H1 (cell line): ENCODE measurements at regions of chr18 and their contacts with region 1.

Region 1: DNA sequence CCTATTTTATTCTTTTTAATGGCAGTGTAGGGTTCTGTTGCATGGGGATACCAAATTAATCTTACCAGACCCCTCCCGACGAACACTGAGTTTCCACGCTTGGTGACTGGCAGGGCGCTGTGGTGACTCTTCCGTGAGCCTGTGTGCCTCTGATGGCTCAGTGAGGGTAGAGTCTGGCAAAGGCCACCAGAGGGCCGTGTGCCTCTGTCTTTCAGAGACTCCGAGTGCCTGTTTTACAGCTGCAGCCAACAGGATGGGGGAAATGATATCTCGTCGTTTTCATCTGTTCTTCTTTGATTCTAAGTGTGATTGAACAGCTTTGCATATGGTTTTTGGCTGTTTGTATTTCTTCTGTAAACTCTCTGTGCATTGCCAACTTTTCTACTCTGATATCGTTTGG is 99.8 kb downstream of the ZNF236 start:
- DNase-seq: peak in 1 of 2 experiments; percentile 25
- H3K4me3 ChIP-seq: no peak overlapping the region
- H3K27ac ChIP-seq: no peak overlapping the region
- H3K4me1 ChIP-seq: no peaks in the 10 kb centered on the region
- H3K27me3 ChIP-seq: no peaks in the 10 kb centered on the region
- CTCF ChIP-seq: peak; percentile 84 to 88 (median 86)
- EP300 ChIP-seq: no peak
- POLR2A ChIP-seq: no peak
- RAD21 ChIP-seq: peak; percentile 84 to 85

Region 2: DNA sequence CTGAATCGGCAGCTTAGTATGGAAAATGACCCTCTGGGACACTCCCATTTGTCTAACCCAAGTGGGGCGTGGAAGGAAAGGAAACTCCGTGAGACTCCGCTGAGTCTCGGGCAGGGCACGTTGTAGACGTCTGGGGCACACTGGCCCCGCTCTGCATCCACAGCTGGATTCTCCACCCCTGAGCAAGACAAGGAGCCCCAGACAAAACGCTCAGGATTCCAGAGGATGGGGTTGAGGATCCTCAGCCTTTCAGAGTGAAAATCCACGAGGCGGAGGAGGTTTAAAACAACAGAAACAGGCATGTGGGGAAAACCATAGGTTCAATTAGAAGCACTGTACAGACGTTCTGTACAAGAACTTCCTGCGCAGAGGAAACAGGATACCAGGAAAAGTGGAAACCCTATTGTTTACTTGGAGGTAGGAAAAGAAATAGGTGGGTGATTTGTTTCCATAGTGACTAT is 224.6 kb before region 1 on chr18:
- CTCF ChIA-PET with region 1: no interaction called
- POLR2A ChIA-PET with region 1: no interaction called
- DNase-seq: no peak
- H3K4me3 ChIP-seq: no peak overlapping the region
- H3K27ac ChIP-seq: no peak overlapping the region
- H3K4me1 ChIP-seq: no peaks in the 10 kb centered on the region; a peak in 2 of 7 replicates
- H3K27me3 ChIP-seq: no peaks in the 10 kb centered on the region
- CTCF ChIP-seq: no peak
- EP300 ChIP-seq: no peak
- POLR2A ChIP-seq: no peak
- RAD21 ChIP-seq: no peak

Region 3: DNA sequence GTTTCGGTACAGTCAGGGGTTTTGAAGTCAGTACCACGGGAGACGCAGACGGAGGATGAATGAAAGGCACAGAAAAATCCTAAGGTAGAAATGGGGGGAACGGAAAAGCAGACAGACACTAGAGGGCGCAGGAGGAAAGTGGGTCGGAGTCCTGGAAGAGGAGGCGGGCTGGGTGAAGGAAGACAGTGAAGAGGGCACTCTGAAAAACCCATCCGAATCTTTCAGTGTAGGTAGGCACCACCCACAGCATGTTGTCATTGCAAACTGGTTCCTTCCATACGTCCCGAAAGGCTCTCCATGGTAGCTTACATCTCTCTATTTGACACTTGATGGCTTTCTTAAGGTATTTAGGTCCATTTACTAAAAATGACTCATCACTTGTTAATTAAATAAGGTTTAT is 118.3 kb before region 1 on chr18:
- CTCF ChIA-PET with region 1: interaction called, 12 read pairs
- POLR2A ChIA-PET with region 1: no interaction called
- DNase-seq: peak in 1 of 2 experiments; percentile 88
- H3K4me3 ChIP-seq: no peak overlapping the region
- H3K27ac ChIP-seq: no peak overlapping the region
- H3K4me1 ChIP-seq: peaks cover 0 to 2% (median 0%) of the 10 kb centered on the region in 4 experiments; a peak in 2 of 7 replicates
- H3K27me3 ChIP-seq: no peaks in the 10 kb centered on the region
- CTCF ChIP-seq: peak; percentile 78 to 92 (median 85)
- EP300 ChIP-seq: no peak
- POLR2A ChIP-seq: no peak
- RAD21 ChIP-seq: peak; percentile 66 to 72

Region 4: GRCh38 chr18:76905821-76906220 is 16.3 kb before region 1 on chr18:
- CTCF ChIA-PET with region 1: interaction called, 14 read pairs
- POLR2A ChIA-PET with region 1: no interaction called
- DNase-seq: no peak
- H3K4me3 ChIP-seq: no peak overlapping the region
- H3K27ac ChIP-seq: no peak overlapping the region
- H3K4me1 ChIP-seq: no peaks in the 10 kb centered on the region
- H3K27me3 ChIP-seq: no peaks in the 10 kb centered on the region
- CTCF ChIP-seq: no peak
- EP300 ChIP-seq: no peak
- POLR2A ChIP-seq: no peak
- RAD21 ChIP-seq: no peak

Region 5: DNA sequence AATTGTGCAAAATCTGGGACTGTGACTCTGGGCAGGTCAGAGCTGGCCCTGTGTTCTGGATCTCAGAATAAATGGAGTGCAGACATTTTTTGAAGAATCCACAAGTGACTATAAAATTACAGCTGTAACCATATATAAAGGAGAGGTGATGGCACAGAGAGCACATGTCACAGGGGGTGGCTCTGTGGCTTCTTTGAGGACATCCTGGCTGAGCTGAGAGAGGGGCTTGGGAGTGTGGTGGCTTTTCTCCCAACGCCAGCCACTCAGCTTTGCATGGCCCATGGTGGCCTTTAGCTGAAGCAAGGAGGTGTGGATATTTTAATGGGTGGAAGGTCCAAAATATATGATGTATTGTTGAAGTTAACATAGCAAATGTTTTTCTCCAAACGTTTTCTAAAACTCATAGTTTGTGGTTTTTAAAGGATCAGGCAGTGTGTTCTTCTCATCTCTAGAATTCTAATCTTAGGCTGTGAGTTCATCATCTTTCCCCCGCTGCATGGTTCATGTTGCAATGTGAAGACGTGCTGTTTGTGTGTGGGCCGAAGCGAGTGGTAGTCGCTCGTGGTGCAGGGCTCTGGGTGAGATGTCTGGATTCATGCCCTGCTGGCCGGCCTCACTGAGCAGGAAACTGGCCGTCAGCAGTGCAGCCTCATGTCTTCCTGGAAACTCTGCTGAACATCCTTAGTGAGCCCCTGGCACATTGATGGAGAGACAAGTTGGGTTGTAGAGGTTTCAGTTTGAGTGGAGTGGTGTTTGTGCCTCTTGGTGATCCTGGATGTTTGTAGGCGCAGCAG is 10.1 kb after region 1 on chr18:
- CTCF ChIA-PET with region 1: interaction called, 19 read pairs
- POLR2A ChIA-PET with region 1: no interaction called
- DNase-seq: no peak
- H3K4me3 ChIP-seq: no peak overlapping the region
- H3K27ac ChIP-seq: no peak overlapping the region
- H3K4me1 ChIP-seq: no peaks in the 10 kb centered on the region
- H3K27me3 ChIP-seq: no peaks in the 10 kb centered on the region
- CTCF ChIP-seq: no peak
- EP300 ChIP-seq: no peak
- POLR2A ChIP-seq: no peak
- RAD21 ChIP-seq: no peak

Region 6: GRCh38 chr18:76937597-76937996 is 15.5 kb after region 1 on chr18:
- CTCF ChIA-PET with region 1: interaction called, 19 read pairs
- POLR2A ChIA-PET with region 1: no interaction called
- DNase-seq: no peak
- H3K4me3 ChIP-seq: no peak overlapping the region
- H3K27ac ChIP-seq: no peak overlapping the region
- H3K4me1 ChIP-seq: no peaks in the 10 kb centered on the region
- H3K27me3 ChIP-seq: no peaks in the 10 kb centered on the region
- CTCF ChIP-seq: no peak
- EP300 ChIP-seq: no peak
- POLR2A ChIP-seq: no peak
- RAD21 ChIP-seq: no peak

Region 7: DNA sequence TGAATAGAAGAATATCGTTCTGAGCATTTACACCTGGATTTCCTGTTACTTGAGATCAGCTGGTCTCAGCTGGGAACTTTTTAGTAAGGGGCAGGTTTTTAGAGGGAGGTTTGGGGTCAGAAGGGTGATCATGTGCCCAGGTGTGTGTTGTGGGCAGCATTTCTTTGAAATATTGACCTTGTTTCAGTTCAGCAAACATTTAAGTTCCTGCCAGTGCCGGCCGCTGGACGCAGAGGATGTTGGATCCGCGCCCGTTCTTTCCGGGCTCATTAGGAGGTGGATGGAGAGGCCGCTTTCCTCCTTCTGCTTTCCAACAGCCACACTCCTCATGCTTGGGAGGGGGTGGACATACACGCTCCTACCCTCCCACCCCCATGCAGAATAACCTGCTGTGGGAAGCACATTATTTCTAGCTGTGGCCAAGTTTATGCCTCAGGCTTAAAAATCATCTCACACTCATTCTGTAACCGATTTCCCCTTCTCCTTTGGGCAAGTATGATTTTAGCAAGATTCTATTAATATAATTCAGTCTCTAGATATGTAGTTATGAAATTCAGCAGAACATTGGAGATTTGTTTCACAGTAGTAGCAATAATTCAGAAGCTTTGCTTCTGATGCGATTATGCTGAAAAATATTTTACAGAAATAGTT is 31.6 kb after region 1 on chr18:
- CTCF ChIA-PET with region 1: interaction called, 30 read pairs
- POLR2A ChIA-PET with region 1: no interaction called
- DNase-seq: no peak
- H3K4me3 ChIP-seq: no peak overlapping the region
- H3K27ac ChIP-seq: no peak overlapping the region
- H3K4me1 ChIP-seq: 0 out of 7 replicates have a peak, but pooled peaks cover 0 to 2% (median 0%) of the 10 kb centered on the region in 4 experiments
- H3K27me3 ChIP-seq: no peaks in the 10 kb centered on the region
- CTCF ChIP-seq: no peak
- EP300 ChIP-seq: no peak
- POLR2A ChIP-seq: no peak
- RAD21 ChIP-seq: no peak

Region 8: GRCh38 chr18:76958692-76959341 is 36.7 kb after region 1 on chr18:
- CTCF ChIA-PET with region 1: interaction called, 30 read pairs
- POLR2A ChIA-PET with region 1: no interaction called
- DNase-seq: no peak
- H3K4me3 ChIP-seq: no peak overlapping the region
- H3K27ac ChIP-seq: no peak overlapping the region
- H3K4me1 ChIP-seq: 0 out of 7 replicates have a peak, but pooled peaks cover 0 to 2% (median 0%) of the 10 kb centered on the region in 4 experiments
- H3K27me3 ChIP-seq: no peaks in the 10 kb centered on the region
- CTCF ChIP-seq: no peak
- EP300 ChIP-seq: no peak
- POLR2A ChIP-seq: no peak
- RAD21 ChIP-seq: no peak